Activated CD4-positive, alpha-beta memory T cell treated with anti-CD3 and anti-CD28 coated beads, Interleukin-2, amount 10 ng/mL, durations not matched to agents 7 days and 5 days (primary cell): ENCODE measurements at regions of chr2 and their contacts with region 1.

Region 1: DNA sequence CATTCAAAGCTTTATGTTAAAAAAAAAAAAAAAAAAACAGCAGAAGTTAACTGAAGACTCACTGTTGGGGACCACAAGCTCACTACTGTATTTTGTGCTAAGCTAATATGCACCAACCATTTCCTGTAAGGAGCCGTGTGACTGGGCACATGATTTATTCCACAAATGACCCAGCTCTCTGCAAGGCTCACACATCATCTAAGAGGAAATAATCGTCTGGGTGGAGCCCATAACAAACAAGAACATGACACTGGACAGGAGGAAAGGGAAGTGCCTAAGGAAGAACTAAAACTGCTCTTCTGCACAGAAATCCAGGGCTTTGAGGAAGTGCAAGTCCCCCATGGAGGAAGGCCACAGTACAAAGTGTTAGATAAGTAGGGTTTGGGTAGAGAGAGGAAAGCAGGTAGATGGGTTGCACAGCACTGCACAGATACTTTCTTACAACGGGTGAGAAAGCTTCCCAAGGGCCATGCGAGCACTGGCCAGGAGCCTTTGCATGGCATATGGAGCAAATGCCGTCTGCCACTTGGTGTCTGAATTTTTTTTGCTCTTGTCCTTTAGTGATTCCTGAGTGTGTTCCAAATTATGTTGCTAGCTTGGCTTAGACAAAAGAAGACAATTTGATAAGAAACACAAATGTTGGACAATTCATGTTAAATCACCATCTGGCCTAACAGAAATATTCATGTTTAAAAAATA is 24.4 kb downstream of the NFE2L2 start:
- DNase-seq: peak; percentile 64
- H3K4me3 Mint-ChIP-seq: peak overlapping the region; percentile 34
- H3K27ac Mint-ChIP-seq: peak overlapping the region; percentile 84
- H3K4me1 Mint-ChIP-seq: peaks cover 74% of the 10 kb centered on the region
- H3K27me3 Mint-ChIP-seq: no peaks in the 10 kb centered on the region

Region 2: DNA sequence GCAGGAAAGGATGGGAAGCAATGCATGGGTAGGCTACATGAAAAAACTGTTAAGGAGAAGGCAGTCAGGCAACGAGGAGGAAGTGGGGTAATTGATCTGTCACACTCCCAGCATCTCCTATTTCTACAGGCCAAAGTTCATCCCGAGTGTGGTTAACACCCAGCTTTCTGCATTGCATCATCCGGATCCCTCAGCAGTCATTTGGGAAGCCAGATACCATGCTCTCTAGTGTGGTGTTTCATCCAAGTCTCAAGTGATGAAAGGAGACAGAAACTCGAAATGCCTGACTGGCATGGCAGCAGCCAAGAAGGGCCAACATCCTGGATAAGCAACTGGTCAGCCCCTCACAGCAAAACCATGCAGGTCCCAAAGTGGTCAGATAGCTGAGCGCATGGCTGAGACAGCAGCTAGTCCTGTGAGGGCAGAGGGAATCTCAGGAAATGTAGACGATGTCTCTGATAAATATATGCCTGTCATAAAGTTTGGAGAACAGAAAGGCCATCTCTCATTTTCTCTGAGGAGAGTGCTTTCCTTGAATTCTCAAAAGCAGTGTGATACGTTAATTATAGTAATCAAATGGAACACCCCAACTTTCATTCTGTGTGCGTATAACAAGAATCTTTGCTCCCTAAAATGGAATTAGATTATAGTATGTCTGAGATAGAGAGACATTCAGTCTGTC is 52.3 kb before region 1 on chr2:
- CTCF ChIA-PET with region 1: no interaction called
- POLR2A ChIA-PET with region 1: no interaction called
- DNase-seq: no peak
- H3K4me3 Mint-ChIP-seq: no peak overlapping the region
- H3K27ac Mint-ChIP-seq: no peak overlapping the region
- H3K4me1 Mint-ChIP-seq: peaks cover 2% of the 10 kb centered on the region
- H3K27me3 Mint-ChIP-seq: peaks cover 11% of the 10 kb centered on the region

Region 3: DNA sequence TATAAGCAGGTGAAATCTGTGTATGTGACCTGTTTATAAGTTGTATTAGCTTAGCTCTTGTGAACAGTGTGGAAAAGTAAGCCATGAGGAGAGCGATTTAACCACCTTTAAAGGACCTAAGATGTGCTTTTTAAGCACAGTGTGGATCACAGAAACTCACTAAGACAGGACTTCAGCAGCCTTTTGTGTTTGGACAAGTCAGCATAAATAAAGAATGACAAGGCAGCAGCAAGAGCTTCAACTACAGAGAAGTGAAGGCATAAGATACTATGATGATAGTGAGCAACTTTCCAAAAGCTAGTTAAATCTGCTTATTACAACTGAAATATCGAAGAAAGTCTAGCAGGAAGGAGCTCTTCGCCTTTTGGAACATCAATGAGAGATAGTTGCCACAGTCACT is 18.5 kb before region 1 on chr2:
- CTCF ChIA-PET with region 1: interaction called, 3 read pairs
- POLR2A ChIA-PET with region 1: interaction called, 62 read pairs
- DNase-seq: no peak
- H3K4me3 Mint-ChIP-seq: no peak overlapping the region
- H3K27ac Mint-ChIP-seq: no peak overlapping the region
- H3K4me1 Mint-ChIP-seq: peaks cover 43% of the 10 kb centered on the region
- H3K27me3 Mint-ChIP-seq: no peaks in the 10 kb centered on the region

Region 4: GRCh38 chr2:177229448-177230242 is 10.4 kb before region 1 on chr2:
- CTCF ChIA-PET with region 1: interaction called, 3 read pairs
- POLR2A ChIA-PET with region 1: interaction called, 62 read pairs
- DNase-seq: no peak
- H3K4me3 Mint-ChIP-seq: no peak overlapping the region
- H3K27ac Mint-ChIP-seq: peak overlapping the region; percentile 48
- H3K4me1 Mint-ChIP-seq: peaks cover 35% of the 10 kb centered on the region
- H3K27me3 Mint-ChIP-seq: no peaks in the 10 kb centered on the region

Region 5: DNA sequence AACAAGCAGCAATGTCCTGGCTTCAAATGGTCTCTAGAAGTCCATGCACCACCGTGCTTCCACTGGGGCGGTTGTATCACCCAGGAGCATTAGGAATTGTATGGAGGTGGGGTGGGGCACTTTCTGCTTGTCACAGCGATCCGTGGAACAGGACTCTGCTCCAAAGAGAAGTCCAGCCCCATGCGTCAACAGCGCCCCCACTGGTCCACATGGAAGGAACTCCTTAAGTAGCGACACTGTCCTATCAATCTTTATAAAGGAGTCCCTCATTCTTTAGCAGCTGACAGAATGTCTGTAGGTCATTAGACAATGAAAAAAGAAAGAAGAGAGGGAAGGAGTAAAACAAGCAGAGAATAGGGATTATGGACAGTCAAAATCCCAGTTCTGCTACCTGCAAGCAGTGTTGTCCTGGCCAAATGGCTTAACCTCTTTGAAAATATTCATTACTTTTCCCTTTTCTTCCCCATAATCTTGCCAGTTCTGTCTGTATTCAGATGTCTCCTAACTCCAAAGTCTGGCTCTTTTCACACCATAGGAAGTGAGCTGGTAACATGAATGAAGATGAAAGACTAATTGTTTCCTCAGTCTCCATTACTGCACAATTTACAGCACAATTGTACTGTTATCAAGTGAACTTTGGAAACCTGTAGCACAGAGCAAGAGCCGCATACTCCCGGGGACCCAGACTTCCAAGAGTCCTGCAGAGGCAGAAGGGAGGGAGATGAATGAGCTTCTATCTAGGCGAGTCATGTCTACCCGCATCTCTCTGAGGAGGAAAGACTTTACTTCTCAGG is 14.5 kb after region 1 on chr2:
- CTCF ChIA-PET with region 1: interaction called, 15 read pairs
- POLR2A ChIA-PET with region 1: interaction called, 27 read pairs
- DNase-seq: no peak
- H3K4me3 Mint-ChIP-seq: no peak overlapping the region
- H3K27ac Mint-ChIP-seq: peak overlapping the region; percentile 61
- H3K4me1 Mint-ChIP-seq: peaks cover 92% of the 10 kb centered on the region
- H3K27me3 Mint-ChIP-seq: no peaks in the 10 kb centered on the region